Mammary epithelial cell (primary cell): ENCODE measurements at regions of chr11 and their contacts with region 1.

Region 1: GRCh38 chr11:65225279-65226102 is 36.3 kb upstream of the POLA2 start:
- DNase-seq: peak; percentile 77
- H3K4me3 ChIP-seq: peak overlapping the region; percentile 39 to 46 (median 45)
- H3K27ac ChIP-seq: peak overlapping the region; percentile 45
- H3K4me1 ChIP-seq: peaks cover 19% of the 10 kb centered on the region
- H3K27me3 ChIP-seq: no peaks in the 10 kb centered on the region
- CTCF ChIP-seq: peak; percentile 21 to 62

Region 2: DNA sequence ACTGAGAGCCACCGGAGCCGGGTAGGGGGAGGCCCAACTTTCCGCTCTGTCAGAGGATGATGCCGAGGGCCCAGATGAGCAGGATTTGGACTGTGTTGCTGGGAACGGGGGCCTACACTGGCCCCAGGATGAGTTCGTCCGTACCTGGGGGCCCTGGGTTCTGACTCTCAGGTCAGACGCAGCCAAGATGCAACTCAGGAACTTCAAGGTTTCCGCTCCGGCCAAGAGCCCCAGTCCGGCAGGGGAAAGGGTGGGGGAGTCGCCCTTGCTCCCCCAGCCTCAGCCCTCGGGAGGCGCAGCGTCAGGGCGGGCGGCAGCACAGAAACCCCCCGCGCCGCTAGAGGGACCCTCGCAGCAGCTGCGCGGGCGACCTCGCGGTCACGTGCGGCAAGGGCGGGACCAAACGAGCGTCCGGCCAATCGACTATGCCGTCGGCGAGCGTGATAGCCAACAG is 211.8 kb before region 1 on chr11:
- CTCF ChIA-PET with region 1: no interaction called
- dilution Hi-C with region 1: no loop called
- in situ Hi-C with region 1: no loop called
- intact Hi-C with region 1: no loop called
- DNase-seq: peak; percentile 74
- H3K4me3 ChIP-seq: peak overlapping the region; percentile 64 to 85 (median 72)
- H3K27ac ChIP-seq: peak overlapping the region; percentile 90
- H3K4me1 ChIP-seq: peaks cover 11% of the 10 kb centered on the region
- H3K27me3 ChIP-seq: no peaks in the 10 kb centered on the region
- CTCF ChIP-seq: no peak

Region 3: DNA sequence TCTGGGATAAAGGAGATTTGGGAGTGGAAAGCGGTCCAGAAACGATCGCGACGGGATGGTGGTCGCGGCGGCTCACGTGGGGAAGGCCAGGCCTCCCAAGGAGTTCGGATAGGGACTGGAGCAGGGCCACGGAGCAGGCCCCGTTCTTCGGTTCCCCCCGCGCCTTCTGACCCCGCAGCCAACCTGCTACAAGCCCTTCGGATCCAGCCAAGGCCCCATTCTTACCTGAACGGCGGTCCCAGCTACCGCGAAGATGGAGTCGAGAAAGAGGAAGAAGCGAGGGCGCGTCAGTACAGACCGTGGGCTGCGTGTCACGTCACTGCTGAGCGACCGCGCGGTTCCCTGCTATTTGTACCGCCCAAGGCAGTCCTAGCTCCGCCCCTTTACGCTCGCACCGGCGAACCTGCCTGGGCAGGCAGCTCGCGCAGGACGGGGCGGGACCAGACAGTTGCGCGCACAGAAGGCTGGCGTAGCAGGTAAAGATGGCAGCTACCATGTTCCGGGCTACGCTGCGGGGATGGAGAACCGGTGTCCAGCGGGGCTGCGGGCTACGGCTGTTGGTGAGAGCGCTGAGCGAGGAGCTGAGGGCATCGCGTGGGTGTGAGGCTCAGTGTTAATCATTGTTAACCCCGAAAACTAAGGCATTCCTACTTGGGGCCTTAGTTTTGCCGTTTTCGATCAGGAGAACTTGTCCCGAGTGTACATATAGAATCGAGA is 103.5 kb before region 1 on chr11 and contains the starts of genes FAU and MRPL49:
- CTCF ChIA-PET with region 1: no interaction called
- dilution Hi-C with region 1: no loop called
- in situ Hi-C with region 1: no loop called
- intact Hi-C with region 1: no loop called
- DNase-seq: peak; percentile 97
- H3K4me3 ChIP-seq: peak within 1 kb of the TSS; percentile 70 to 95 (median 83)
- H3K27ac ChIP-seq: peak within 1 kb of the TSS; percentile 90
- H3K4me1 ChIP-seq: peaks cover 16% of the 10 kb centered on the region
- H3K27me3 ChIP-seq: no peaks in the 10 kb centered on the region
- CTCF ChIP-seq: no peak
- total RNA-seq, gene FAU: 107 to 637 TPM
- total RNA-seq, gene MRPL49: 54.7 to 56.5 TPM

Region 4: DNA sequence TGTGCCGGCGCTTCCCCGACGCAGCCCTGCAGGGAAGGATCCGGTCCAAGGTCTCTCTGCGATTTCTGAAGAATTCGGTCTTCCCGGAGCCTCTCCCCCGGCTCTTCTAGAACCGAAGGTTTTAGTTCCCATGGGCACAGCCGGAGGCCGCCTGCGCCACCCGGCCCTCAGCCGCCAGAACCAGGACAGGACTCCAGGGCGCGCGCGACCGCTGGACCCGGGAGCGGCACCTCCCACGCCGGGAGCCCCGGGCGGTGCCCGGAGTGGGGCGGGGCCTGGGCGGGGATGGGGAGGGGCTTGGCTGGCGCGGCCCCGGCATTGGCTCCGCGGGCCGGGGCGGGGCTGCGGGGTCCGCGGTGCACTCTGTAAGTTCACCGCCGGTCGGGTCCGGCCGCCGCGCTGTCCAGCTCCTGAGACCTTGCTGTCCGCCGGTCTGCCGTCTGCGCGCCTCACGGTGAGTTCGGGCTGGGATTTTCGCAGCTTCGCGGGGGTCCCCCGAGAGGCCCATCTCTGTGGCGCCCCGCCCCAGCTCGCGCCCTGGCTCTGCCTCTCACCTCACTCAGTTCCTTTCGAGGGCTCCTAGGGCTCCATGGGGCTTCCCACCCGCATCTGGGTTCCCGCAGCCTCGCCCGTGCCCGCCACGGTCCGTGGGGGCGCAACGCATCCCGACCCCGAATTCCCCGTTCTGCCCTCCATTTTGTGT is 89.2 kb after region 1 on chr11 and contains the start of gene CDC42EP2:
- CTCF ChIA-PET with region 1: interaction called, 5 read pairs
- dilution Hi-C with region 1: no loop called
- in situ Hi-C with region 1: loop called in 1 of 2 experiments (anchors 10 kb)
- intact Hi-C with region 1: loop called (anchors 1 kb)
- DNase-seq: peak; percentile 82
- H3K4me3 ChIP-seq: peak within 1 kb of the TSS; percentile 77 to 91 (median 88)
- H3K27ac ChIP-seq: peak within 1 kb of the TSS; percentile 46
- H3K4me1 ChIP-seq: peaks cover 13% of the 10 kb centered on the region
- H3K27me3 ChIP-seq: no peaks in the 10 kb centered on the region
- CTCF ChIP-seq: no peak
- total RNA-seq, gene CDC42EP2: 6.8 to 24.8 TPM

Region 5: DNA sequence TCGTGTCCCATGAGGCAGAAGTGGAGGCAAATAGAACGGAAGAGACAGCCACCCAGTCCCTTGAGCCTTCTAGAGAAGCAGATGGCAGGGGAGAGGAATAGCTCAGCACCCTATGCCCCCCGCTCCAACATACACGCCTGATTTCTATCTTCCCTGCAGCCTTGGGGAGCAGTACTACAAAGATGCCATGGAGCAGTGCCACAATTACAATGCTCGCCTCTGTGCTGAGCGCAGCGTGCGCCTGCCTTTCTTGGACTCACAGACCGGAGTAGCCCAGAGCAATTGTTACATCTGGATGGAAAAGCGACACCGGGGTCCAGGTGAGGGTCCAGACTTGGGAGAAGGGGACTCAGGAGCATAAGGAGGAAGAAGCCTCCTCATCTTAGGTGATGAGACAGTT is 114.7 kb after region 1 on chr11:
- CTCF ChIA-PET with region 1: no interaction called
- dilution Hi-C with region 1: no loop called
- in situ Hi-C with region 1: no loop called
- intact Hi-C with region 1: no loop called
- DNase-seq: no peak
- H3K4me3 ChIP-seq: no peak overlapping the region
- H3K27ac ChIP-seq: no peak overlapping the region
- H3K4me1 ChIP-seq: peaks cover 4% of the 10 kb centered on the region
- H3K27me3 ChIP-seq: no peaks in the 10 kb centered on the region
- CTCF ChIP-seq: no peak